Posterior vena cava (tissue), 2 donors: ENCODE measurements at regions of chr10 and their contacts with region 1.

Region 1: DNA sequence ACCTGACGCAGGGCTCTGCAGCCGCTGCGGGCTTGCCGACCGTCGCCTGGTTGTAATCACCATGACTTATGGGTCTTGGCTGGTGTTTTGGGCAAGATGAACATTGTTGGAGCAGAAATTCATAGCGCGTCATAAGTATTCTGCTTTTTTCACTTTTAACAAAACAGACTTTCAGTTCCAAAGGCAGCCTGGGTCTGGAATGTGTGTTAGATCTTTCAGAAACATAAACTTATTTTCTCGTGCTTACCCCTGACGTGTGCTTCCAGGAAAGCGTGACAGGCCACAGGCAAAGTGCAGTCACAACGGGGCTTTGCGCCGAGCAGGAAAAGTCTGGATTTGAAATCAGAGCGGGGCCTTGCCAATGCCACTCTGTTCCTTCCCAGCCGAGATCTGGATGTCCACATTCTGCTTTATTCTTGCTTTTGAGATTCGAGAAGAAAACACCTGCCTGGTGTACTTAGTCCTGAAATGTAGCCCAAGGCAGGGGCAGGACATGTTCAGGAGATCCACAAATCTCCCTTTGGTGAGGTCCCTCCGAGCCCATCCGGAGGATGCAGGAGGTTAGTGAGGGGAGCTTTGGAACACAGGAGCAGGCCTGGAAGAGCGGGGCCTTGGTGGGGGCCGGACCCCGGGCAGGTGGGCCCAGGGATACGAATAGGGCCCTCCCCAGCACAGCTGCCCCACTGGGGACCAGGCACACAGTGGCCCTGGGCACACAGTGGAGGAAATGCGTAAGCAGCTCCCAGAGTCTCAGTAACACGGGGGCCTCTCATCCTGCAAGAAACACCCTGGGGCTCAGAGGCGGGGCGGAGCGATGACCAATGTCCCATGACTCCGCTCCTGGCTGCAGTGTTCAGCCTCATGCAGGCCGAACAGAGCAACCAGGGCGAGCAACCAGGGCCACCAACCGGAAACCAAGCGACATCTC is 49.5 kb upstream of the EBF3 start:
- DNase-seq: peak; percentile 83

Region 2: DNA sequence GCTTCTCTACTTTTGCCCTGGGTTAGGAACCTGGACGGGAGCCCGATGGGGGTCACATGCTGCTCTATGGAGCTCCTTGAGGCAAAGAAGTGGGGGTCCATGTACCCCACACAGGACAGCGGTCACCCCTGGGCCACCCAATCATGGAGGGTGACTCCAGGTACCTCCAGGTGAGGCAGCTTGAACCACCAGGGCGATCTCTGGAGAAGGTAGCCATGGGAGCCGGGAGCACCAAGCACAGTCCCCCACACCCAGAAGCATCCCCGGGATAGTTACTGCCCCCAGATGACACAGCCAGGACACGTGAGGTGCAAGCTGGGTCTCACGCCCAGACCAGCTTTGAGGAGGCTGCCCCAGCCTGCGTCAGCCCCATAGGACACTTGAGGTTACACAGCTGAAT is 38.6 kb after region 1 on chr10:
- intact Hi-C with region 1: loop called in 1 of 2 experiments (anchors 1 kb)
- DNase-seq: peak; percentile 72